Transverse colon (tissue), 4 donors: ENCODE measurements at regions of chr11 and their contacts with region 1.

Region 1: DNA sequence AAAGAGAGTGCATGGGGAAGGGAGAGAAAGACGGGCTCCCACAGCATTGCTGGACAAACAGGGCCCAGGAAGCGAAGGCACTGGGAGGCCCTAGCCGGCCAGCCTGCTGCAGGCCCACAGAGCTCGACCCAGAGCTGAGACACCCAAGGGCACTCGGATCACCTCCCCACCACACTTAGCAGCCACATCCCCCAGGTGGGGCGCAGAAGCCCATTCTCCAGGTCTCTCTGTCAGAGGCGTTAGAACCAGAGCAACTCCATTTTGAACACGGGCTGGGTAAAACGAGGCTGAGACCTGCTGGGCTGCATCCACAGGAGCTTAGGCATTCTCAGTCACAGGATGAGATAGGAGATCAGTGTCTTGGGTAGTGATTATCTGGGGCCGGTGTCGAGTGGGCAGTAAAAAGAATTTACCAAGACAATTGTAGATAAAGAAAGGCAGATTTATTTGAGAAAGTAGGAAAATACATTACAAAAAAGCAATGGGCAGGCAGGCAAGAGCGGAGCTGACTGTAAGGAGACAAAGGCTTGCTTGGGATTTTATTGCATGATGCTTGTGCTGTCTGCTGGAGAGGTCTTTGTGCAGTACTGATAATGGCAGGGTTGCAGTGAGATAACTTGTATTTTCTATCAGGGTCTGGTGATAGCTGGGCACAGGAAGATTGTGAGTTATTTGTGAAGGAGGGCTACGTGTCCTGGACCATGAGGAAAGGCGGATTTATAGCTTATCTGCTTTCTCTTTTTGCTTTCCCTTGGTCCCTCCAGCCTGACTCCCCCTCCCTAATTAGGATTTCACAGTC is 13.4 kb upstream of the CAPN5 start:
- DNase-seq: no peak
- H3K4me3 ChIP-seq: no peak overlapping the region
- H3K27ac ChIP-seq: no peak overlapping the region
- H3K4me1 ChIP-seq: peaks cover 0 to 20% (median 8%) of the 10 kb centered on the region in 4 donors
- H3K27me3 ChIP-seq: no peaks in the 10 kb centered on the region
- CTCF ChIP-seq: no peak
- EP300 ChIP-seq: no peak
- POLR2A ChIP-seq: no peak

Region 2: GRCh38 chr11:76791861-76792260 is 261.6 kb before region 1 on chr11:
- in situ Hi-C with region 1: no loop called
- intact Hi-C with region 1: no loop called
- DNase-seq: no peak
- H3K4me3 ChIP-seq: no peak overlapping the region
- H3K27ac ChIP-seq: no peak overlapping the region
- H3K4me1 ChIP-seq: peaks cover 13 to 53% (median 47%) of the 10 kb centered on the region in 4 donors
- H3K27me3 ChIP-seq: no peaks in the 10 kb centered on the region
- CTCF ChIP-seq: no peak
- EP300 ChIP-seq: no peak
- POLR2A ChIP-seq: no peak

Region 3: DNA sequence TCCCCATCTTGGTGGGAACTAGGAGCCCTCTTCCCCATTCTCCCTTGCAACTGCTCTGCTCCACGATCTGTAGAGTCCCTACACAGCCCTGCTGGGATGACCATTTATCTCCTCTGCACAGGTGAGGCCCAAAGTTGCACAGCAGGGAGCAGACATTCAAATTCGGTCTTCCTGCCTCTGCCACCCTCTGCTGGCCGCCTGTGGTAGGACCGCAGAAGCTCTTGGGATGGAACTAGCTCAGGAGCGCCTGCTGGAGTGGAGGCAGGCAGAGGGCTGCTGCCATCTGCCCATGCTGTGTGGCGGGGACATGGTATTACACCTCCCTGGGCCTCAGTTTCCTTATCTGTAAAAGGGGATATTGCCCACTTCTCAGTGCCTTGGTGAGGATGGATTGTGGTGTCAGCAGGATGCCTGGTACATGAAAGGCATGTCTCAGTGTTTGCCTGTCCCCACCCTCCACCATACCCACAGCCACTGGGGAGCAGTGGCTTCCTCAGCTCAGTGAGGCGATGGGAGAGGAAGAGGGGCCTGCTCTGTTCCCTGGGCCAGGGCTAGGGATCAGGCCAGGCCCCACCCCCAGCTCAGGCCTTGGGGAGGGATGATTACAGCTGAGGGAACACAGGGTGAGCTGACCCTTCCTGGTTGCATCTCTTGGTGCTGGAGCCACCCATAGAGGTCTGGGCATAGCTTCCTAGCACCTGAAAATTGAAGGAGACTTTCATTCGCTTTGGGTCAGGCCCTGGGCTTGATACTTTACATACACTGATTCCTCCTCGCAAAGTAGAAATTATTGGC is 37.9 kb after region 1 on chr11:
- in situ Hi-C with region 1: loop called in 2 of 4 experiments (anchors 5 kb)
- intact Hi-C with region 1: no loop called
- DNase-seq: peak; percentile 92
- H3K4me3 ChIP-seq: no peak overlapping the region
- H3K27ac ChIP-seq: peak overlapping the region; percentile 88 to 94 (median 94)
- H3K4me1 ChIP-seq: peaks cover 39 to 74% (median 54%) of the 10 kb centered on the region in 4 donors
- H3K27me3 ChIP-seq: no peaks in the 10 kb centered on the region
- CTCF ChIP-seq: peak; percentile 91 to 98 (median 96)
- EP300 ChIP-seq: no peak
- POLR2A ChIP-seq: no peak